Caco-2 (cell line): ENCODE measurements at regions of chr10 and their contacts with region 1.

Region 1: GRCh38 chr10:76190634-76191270 is 759.3 kb downstream of the LRMDA start:
- DNase-seq: peak; percentile 72 to 78
- H3K4me3 ChIP-seq: no peak overlapping the region
- H3K4me3 Mint-ChIP-seq: peak overlapping the region; percentile 53
- H3K27ac Mint-ChIP-seq: peak overlapping the region; percentile 92
- H3K4me1 ChIP-seq: peaks cover 47% of the 10 kb centered on the region
- H3K4me1 Mint-ChIP-seq: peaks cover 26% of the 10 kb centered on the region
- H3K27me3 ChIP-seq: no peaks in the 10 kb centered on the region
- H3K27me3 Mint-ChIP-seq: no peaks in the 10 kb centered on the region
- CTCF ChIP-seq: no peak

Region 2: GRCh38 chr10:74855027-74855426 is 1335.7 kb before region 1 on chr10:
- CTCF ChIA-PET with region 1: no interaction called
- POLR2A ChIA-PET with region 1: no interaction called
- intact Hi-C with region 1: no loop called
- DNase-seq: no peak
- H3K4me3 ChIP-seq: no peak overlapping the region
- H3K4me3 Mint-ChIP-seq: no peak overlapping the region
- H3K27ac Mint-ChIP-seq: no peak overlapping the region
- H3K4me1 ChIP-seq: no peaks in the 10 kb centered on the region
- H3K4me1 Mint-ChIP-seq: no peaks in the 10 kb centered on the region
- H3K27me3 ChIP-seq: no peaks in the 10 kb centered on the region
- H3K27me3 Mint-ChIP-seq: no peaks in the 10 kb centered on the region
- CTCF ChIP-seq: no peak

Region 3: DNA sequence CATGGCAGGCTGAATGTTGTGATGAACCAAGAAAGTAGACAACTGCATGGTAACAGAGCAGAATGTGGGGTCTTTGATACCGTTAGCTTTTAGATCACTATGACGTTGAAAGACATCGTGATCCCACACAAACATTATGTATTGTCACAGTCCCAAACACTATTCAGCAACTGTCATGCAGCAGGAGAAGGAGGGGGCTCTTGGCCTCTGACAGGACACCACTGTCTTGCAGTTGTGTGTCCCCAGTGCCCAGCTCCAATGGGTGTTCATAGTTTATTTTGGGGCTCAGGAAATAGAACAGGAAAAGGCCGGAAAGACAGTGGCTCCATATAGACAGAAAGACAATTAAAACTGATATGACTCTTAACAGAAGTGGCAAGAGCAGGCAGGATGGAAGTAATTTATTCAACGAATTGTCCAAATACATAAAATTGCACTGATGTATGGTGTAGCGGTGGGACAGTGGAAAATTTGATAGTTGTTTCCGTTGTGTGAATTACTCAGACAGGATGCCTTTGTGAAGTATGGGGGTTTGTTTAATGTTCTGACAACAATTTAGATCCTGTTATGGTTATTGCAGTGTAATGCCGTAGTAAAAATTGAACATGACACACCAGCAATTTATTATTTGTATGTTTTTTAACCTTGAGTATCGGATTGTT is 467.3 kb before region 1 on chr10:
- CTCF ChIA-PET with region 1: no interaction called
- POLR2A ChIA-PET with region 1: no interaction called
- intact Hi-C with region 1: no loop called
- DNase-seq: no peak
- H3K4me3 ChIP-seq: no peak overlapping the region
- H3K4me3 Mint-ChIP-seq: no peak overlapping the region
- H3K27ac Mint-ChIP-seq: no peak overlapping the region
- H3K4me1 ChIP-seq: no peaks in the 10 kb centered on the region
- H3K4me1 Mint-ChIP-seq: no peaks in the 10 kb centered on the region
- H3K27me3 ChIP-seq: no peaks in the 10 kb centered on the region
- H3K27me3 Mint-ChIP-seq: no peaks in the 10 kb centered on the region
- CTCF ChIP-seq: no peak

Region 4: DNA sequence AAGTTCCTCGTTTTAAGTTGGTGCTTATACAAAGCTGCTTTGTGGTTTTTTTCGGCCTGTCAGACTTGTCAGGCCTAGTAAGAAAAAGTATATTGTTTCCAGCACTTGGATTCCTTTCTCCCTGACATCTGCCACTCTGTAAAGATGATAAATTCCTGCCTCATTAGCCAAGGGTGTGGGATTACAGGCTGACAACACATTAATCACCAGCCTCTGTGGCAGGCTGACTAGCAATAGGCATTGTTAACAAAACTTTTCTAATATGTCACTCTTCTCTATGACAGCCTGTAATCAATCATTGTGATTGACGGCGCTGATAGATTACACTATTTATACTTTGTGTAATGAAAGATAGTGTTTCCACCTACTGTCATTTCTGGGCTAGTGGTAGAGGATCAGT is 76.8 kb before region 1 on chr10:
- CTCF ChIA-PET with region 1: no interaction called
- POLR2A ChIA-PET with region 1: no interaction called
- intact Hi-C with region 1: loop called (anchors 1 kb)
- DNase-seq: peak; percentile 66 to 73
- H3K4me3 ChIP-seq: no peak overlapping the region
- H3K4me3 Mint-ChIP-seq: peak overlapping the region; percentile 47
- H3K27ac Mint-ChIP-seq: peak overlapping the region; percentile 66
- H3K4me1 ChIP-seq: peaks cover 35% of the 10 kb centered on the region
- H3K4me1 Mint-ChIP-seq: peaks cover 44% of the 10 kb centered on the region
- H3K27me3 ChIP-seq: no peaks in the 10 kb centered on the region
- H3K27me3 Mint-ChIP-seq: no peaks in the 10 kb centered on the region
- CTCF ChIP-seq: no peak

Region 5: DNA sequence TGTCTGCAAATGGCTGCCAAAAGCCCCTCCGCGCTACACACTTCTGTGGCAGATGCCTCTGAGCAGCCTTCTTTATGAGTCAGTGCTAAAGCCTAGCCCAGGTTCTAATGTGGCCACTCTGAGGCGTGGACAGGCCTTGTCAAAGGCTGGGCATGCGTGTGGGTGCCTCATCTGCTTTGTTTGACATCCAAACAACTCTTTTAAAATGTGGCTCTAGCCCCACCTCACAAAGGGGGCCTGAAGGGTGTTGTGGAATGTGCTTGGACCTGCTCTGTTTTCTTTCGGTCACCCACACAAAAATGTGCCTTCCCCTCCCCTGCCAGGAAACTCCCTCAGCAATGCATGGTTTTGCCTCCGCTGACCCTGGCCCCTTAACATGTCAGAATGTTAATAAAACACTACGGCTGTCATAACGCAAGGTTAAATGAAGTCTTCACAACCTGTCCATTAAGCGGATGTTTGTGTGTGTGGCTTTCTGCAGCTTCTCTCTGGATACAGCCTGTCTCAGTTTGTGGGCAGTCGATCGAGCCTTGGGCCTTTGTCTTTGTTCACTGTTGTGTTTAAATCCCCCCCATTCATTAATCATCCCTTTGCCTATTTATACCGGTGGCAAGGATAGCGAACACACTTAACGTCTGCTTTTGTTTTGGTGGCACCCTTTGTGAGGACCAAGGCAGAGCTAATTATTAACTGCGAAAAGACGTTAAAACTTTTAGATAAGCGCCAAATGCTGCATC is 40.4 kb before region 1 on chr10:
- CTCF ChIA-PET with region 1: interaction called, 8 read pairs
- POLR2A ChIA-PET with region 1: interaction called, 13 read pairs
- intact Hi-C with region 1: loop called (anchors 1 kb)
- DNase-seq: peak; percentile 93 to 95
- H3K4me3 ChIP-seq: peak overlapping the region; percentile 17; the same call in 1 of the 2 replicates
- H3K4me3 Mint-ChIP-seq: peak overlapping the region; percentile 68
- H3K27ac Mint-ChIP-seq: peak overlapping the region; percentile 99
- H3K4me1 ChIP-seq: peaks cover 26% of the 10 kb centered on the region
- H3K4me1 Mint-ChIP-seq: peaks cover 28% of the 10 kb centered on the region
- H3K27me3 ChIP-seq: no peaks in the 10 kb centered on the region
- H3K27me3 Mint-ChIP-seq: no peaks in the 10 kb centered on the region
- CTCF ChIP-seq: no peak

Region 6: GRCh38 chr10:76236356-76236755 is 45.6 kb after region 1 on chr10:
- CTCF ChIA-PET with region 1: no interaction called
- POLR2A ChIA-PET with region 1: no interaction called
- intact Hi-C with region 1: loop called (anchors 1 kb)
- DNase-seq: no peak
- H3K4me3 ChIP-seq: no peak overlapping the region
- H3K4me3 Mint-ChIP-seq: no peak overlapping the region
- H3K27ac Mint-ChIP-seq: no peak overlapping the region
- H3K4me1 ChIP-seq: peaks cover 21% of the 10 kb centered on the region
- H3K4me1 Mint-ChIP-seq: peaks cover 19% of the 10 kb centered on the region
- H3K27me3 ChIP-seq: no peaks in the 10 kb centered on the region
- H3K27me3 Mint-ChIP-seq: no peaks in the 10 kb centered on the region
- CTCF ChIP-seq: no peak

Region 7: DNA sequence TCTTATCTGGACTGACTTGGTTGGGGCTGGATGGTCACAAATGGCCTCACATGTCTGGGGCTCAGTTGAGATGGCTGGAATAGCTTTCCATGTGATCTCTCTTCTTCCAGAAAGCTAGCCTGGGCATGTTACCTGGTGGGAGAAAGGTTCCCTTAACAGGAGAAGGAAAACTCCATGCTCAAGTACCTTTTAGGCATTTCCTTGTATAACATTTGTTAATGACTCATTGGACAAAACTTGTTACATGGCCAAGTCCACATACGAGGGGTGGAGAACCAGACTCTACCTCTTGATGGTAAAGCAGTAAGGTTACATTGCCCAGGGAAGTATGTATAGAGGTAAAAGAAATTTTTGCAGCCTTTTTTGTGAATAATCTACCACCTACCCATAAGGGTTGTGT is 67.1 kb after region 1 on chr10:
- CTCF ChIA-PET with region 1: no interaction called
- POLR2A ChIA-PET with region 1: no interaction called
- intact Hi-C with region 1: loop called (anchors 1 kb)
- DNase-seq: no peak
- H3K4me3 ChIP-seq: no peak overlapping the region
- H3K4me3 Mint-ChIP-seq: no peak overlapping the region
- H3K27ac Mint-ChIP-seq: no peak overlapping the region
- H3K4me1 ChIP-seq: no peaks in the 10 kb centered on the region
- H3K4me1 Mint-ChIP-seq: no peaks in the 10 kb centered on the region
- H3K27me3 ChIP-seq: no peaks in the 10 kb centered on the region
- H3K27me3 Mint-ChIP-seq: no peaks in the 10 kb centered on the region
- CTCF ChIP-seq: no peak

Region 8: DNA sequence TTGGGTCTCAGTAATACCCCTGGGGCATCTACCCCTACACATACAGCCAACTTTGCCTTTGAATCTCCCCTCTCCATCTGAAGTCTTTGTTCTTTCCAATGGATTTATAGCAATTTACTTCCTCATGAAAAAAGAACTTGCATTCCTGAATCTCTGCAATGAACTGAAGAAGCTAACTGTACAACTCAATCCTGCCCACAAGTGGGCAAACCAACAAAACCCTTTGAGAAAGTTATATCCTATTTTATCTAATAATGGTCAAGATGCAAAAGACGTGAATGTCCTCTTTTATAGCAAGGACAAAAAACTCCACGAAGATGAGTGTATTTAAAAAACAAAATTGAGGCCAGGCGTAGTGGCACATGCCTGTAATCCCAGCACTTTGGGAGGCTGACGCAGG is 232.0 kb after region 1 on chr10:
- CTCF ChIA-PET with region 1: no interaction called
- POLR2A ChIA-PET with region 1: no interaction called
- intact Hi-C with region 1: no loop called
- DNase-seq: no peak
- H3K4me3 ChIP-seq: no peak overlapping the region
- H3K4me3 Mint-ChIP-seq: no peak overlapping the region
- H3K27ac Mint-ChIP-seq: no peak overlapping the region
- H3K4me1 ChIP-seq: no peaks in the 10 kb centered on the region
- H3K4me1 Mint-ChIP-seq: peaks cover 7% of the 10 kb centered on the region
- H3K27me3 ChIP-seq: no peaks in the 10 kb centered on the region
- H3K27me3 Mint-ChIP-seq: no peaks in the 10 kb centered on the region
- CTCF ChIP-seq: no peak